ENCODE measurements at regions of chr18 and their contacts with region 1.

Region 1: DNA sequence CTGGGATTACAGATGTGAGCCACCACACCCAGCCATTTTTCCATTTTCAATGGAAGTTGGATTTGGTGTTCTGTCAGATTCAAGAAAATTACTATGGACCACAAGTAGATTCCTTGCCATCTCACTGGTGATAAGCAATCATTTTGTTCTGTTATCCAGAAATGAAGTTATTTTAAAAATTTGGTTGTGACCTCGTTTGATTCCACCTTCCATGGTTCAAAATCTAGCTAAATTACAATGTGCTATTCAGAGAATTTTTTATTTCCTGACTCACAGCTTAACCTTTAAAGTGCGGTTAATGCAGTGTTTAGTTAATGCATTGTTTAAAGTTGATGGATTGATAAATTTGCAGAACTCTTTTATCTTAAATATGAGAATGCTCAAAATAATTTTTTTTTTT is 243.2 kb upstream of the BOD1L2 start:
- DNase-seq: no peak
- H3K4me3 ChIP-seq: no peak overlapping the region
- H3K27ac ChIP-seq: no peak overlapping the region
- H3K4me1 ChIP-seq: no peaks in the 10 kb centered on the region
- H3K27me3 ChIP-seq: no peaks in the 10 kb centered on the region
- CTCF ChIP-seq: no peak

Region 2: GRCh38 chr18:56702946-56703345 is 200.7 kb before region 1 on chr18:
- CTCF ChIA-PET with region 1: interaction called, 10 read pairs
- dilution Hi-C with region 1: no loop called
- in situ Hi-C with region 1: no loop called
- intact Hi-C with region 1: no loop called
- DNase-seq: peak; percentile 30
- H3K4me3 ChIP-seq: no peak overlapping the region
- H3K27ac ChIP-seq: no peak overlapping the region
- H3K4me1 ChIP-seq: no peaks in the 10 kb centered on the region
- H3K27me3 ChIP-seq: no peaks in the 10 kb centered on the region
- CTCF ChIP-seq: peak; percentile 43 to 44

Region 3: DNA sequence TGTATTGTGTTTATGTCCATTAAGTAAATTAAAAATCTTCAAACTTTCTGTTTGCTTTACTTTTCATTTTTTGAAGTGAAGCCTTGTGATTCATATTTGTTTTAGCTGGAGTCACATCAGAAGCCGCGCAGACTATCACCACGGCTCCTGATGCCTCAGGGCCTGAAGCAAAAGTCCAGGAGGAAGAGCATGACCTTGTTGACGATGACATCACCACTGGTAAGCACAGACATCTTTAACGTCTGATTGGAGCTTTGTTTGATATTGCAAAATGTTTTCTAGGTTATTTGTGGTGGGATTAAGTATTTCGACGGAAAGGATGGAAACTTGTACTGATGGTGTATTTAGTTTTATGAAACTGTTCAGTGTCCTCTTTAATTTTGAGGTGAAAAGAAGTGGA is 87.8 kb before region 1 on chr18:
- CTCF ChIA-PET with region 1: no interaction called
- dilution Hi-C with region 1: no loop called
- in situ Hi-C with region 1: no loop called
- intact Hi-C with region 1: no loop called
- DNase-seq: no peak
- H3K4me3 ChIP-seq: no peak overlapping the region
- H3K27ac ChIP-seq: no peak overlapping the region
- H3K4me1 ChIP-seq: no peaks in the 10 kb centered on the region
- H3K27me3 ChIP-seq: no peaks in the 10 kb centered on the region
- CTCF ChIP-seq: no peak